PC-3 (cell line): ENCODE measurements at regions of chr3 and their contacts with region 1.

Region 1: GRCh38 chr3:159929435-159930141 is 59.0 kb upstream of the IL12A start:
- DNase-seq: peak; percentile 81
- ATAC-seq: peak; percentile 46
- H3K4me3 ChIP-seq: peak overlapping the region; percentile 6; the same call in 1 of the 2 replicates
- H3K27ac ChIP-seq: peak overlapping the region; percentile 88
- H3K4me1 ChIP-seq: peaks cover 32% of the 10 kb centered on the region
- H3K27me3 ChIP-seq: no peaks in the 10 kb centered on the region
- CTCF ChIP-seq: peak; percentile 70

Region 2: GRCh38 chr3:159898147-159898546 is 31.4 kb before region 1 on chr3:
- CTCF ChIA-PET with region 1: no interaction called
- POLR2A ChIA-PET with region 1: interaction called, 12 read pairs
- intact Hi-C with region 1: no loop called
- DNase-seq: no peak
- ATAC-seq: no peak
- H3K4me3 ChIP-seq: no peak overlapping the region
- H3K27ac ChIP-seq: no peak overlapping the region
- H3K4me1 ChIP-seq: no peaks in the 10 kb centered on the region
- H3K27me3 ChIP-seq: no peaks in the 10 kb centered on the region
- CTCF ChIP-seq: no peak

Region 3: GRCh38 chr3:159964166-159964973 is 34.8 kb after region 1 on chr3:
- CTCF ChIA-PET with region 1: no interaction called
- POLR2A ChIA-PET with region 1: no interaction called
- intact Hi-C with region 1: loop called (anchors 5 kb)
- DNase-seq: peak; percentile 94
- ATAC-seq: peak; percentile 99
- H3K4me3 ChIP-seq: peak overlapping the region; percentile 30; the same call in 1 of the 2 replicates
- H3K27ac ChIP-seq: peak overlapping the region; percentile 76
- H3K4me1 ChIP-seq: peaks cover 22% of the 10 kb centered on the region
- H3K27me3 ChIP-seq: no peaks in the 10 kb centered on the region
- CTCF ChIP-seq: no peak

Region 4: DNA sequence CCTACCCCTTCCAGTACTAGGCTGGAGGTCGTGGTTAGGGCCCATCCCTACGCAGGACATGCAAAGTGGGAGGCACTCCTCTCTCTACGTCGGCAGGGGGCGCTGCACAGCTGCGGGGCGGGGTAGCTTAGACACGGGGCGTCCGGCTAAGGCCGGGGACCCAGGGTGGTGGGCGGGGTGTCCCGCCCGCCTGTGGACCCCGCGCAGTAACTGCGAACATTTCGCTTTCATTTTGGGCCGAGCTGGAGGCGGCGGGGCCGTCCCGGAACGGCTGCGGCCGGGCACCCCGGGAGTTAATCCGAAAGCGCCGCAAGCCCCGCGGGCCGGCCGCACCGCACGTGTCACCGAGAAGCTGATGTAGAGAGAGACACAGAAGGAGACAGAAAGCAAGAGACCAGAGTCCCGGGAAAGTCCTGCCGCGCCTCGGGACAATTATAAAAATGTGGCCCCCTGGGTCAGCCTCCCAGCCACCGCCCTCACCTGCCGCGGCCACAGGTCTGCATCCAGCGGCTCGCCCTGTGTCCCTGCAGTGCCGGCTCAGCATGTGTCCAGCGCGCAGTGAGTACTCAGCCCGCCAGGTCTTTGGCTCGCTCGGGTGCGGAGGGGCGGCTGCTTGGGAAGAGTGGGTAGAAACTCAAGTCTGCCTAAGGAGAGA is 59.2 kb after region 1 on chr3 and contains the start of gene IL12A:
- CTCF ChIA-PET with region 1: interaction called, 33 read pairs
- POLR2A ChIA-PET with region 1: interaction called, 4 read pairs
- intact Hi-C with region 1: loop called (anchors 1 kb)
- DNase-seq: peak; percentile 88
- ATAC-seq: peak; percentile 86
- H3K4me3 ChIP-seq: peak within 1 kb of the TSS; percentile 82
- H3K27ac ChIP-seq: peak within 1 kb of the TSS; percentile 25
- H3K4me1 ChIP-seq: peaks cover 17% of the 10 kb centered on the region
- H3K27me3 ChIP-seq: no peaks in the 10 kb centered on the region
- CTCF ChIP-seq: peak; percentile 98
- total RNA-seq, gene IL12A: 6.5 and 8.3 TPM in 2 replicates

Region 5: DNA sequence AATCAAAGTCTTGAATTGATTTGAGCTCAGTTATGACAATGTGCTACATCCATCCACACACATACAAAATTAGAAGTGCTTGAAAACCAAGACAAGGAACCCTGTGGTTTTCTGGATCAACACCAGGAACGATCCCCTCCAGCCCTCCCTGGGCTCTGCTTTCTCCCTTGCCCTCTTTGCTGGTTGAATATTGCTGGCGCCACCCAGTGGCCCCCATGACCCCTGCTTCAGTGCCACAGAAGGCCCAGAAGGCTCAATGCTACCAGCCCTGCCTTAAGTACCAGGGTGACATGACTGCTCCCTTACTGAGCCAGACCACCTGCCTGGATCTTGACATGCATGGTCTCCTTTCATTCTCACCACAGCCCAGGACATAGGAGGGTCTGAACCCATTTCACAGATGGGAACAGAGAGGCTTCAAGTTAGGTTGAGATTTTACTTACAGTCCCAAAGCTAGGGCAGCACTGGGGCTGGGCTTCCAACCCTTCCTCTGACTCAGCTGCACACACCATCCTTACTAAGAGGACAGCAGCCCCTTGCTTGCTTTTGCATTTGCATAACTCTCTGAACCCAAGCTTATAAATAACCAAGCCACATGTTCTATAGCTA is 74.0 kb after region 1 on chr3:
- CTCF ChIA-PET with region 1: interaction called, 40 read pairs
- POLR2A ChIA-PET with region 1: no interaction called
- intact Hi-C with region 1: loop called (anchors 1 kb)
- DNase-seq: peak; percentile 78
- ATAC-seq: peak; percentile 82
- H3K4me3 ChIP-seq: no peak overlapping the region
- H3K27ac ChIP-seq: no peak overlapping the region
- H3K4me1 ChIP-seq: no peaks in the 10 kb centered on the region
- H3K27me3 ChIP-seq: no peaks in the 10 kb centered on the region
- CTCF ChIP-seq: peak; percentile 87

Region 6: GRCh38 chr3:160016972-160017371 is 87.4 kb after region 1 on chr3:
- CTCF ChIA-PET with region 1: no interaction called
- POLR2A ChIA-PET with region 1: no interaction called
- intact Hi-C with region 1: no loop called
- DNase-seq: peak; percentile 87
- ATAC-seq: peak; percentile 91
- H3K4me3 ChIP-seq: no peak overlapping the region
- H3K27ac ChIP-seq: no peak overlapping the region
- H3K4me1 ChIP-seq: peaks cover 10% of the 10 kb centered on the region
- H3K27me3 ChIP-seq: no peaks in the 10 kb centered on the region
- CTCF ChIP-seq: no peak